ENCODE measurements at regions of chr18 and their contacts with region 1.

Region 1: GRCh38 chr18:33470216-33470615 is 29.7 kb upstream of the CCDC178 start:
- DNase-seq: no peak
- H3K4me3 ChIP-seq: no peak overlapping the region
- H3K27ac ChIP-seq: no peak overlapping the region
- H3K4me1 ChIP-seq: no peaks in the 10 kb centered on the region
- H3K27me3 ChIP-seq: no peaks in the 10 kb centered on the region
- CTCF ChIP-seq: no peak
- EP300 ChIP-seq: no peak
- POLR2A ChIP-seq: no peak

Region 2: DNA sequence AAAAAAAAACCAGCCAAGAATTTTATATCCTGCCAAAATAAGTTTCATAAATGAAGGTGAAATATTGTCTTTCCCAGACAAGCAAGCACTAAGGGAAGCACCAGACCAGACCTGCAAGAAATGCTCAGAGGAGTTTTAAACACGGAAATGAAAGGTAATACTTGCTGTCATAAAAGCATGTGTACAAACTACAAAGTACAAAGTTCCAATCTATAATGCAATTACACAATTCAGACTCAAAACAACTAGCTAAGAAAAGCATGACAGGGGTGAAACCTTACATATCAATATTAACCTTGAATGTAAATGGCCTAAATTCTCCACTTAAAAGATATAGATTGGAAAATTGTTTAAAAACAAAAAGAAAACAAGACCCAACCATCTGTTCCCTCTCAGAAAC is 62.8 kb after region 1 on chr18:
- in situ Hi-C with region 1: no loop called
- intact Hi-C with region 1: loop called (anchors 2 kb)
- DNase-seq: peak; percentile 11
- H3K4me3 ChIP-seq: no peak overlapping the region
- H3K27ac ChIP-seq: peak overlapping the region; percentile 47 to 65 (median 54)
- H3K4me1 ChIP-seq: peaks cover 0 to 16% (median 7%) of the 10 kb centered on the region in 4 donors
- H3K27me3 ChIP-seq: no peaks in the 10 kb centered on the region
- CTCF ChIP-seq: no peak
- EP300 ChIP-seq: no peak
- POLR2A ChIP-seq: no peak

Region 3: GRCh38 chr18:33673689-33674088 is 203.5 kb after region 1 on chr18:
- in situ Hi-C with region 1: no loop called
- intact Hi-C with region 1: no loop called
- DNase-seq: no peak
- H3K4me3 ChIP-seq: no peak overlapping the region
- H3K27ac ChIP-seq: no peak overlapping the region
- H3K4me1 ChIP-seq: no peaks in the 10 kb centered on the region
- H3K27me3 ChIP-seq: no peaks in the 10 kb centered on the region
- CTCF ChIP-seq: no peak
- EP300 ChIP-seq: no peak
- POLR2A ChIP-seq: no peak

Measured in transverse colon (tissue), 4 donors.